ENCODE measurements at regions of chr4 and their contacts with region 1.

Region 1: DNA sequence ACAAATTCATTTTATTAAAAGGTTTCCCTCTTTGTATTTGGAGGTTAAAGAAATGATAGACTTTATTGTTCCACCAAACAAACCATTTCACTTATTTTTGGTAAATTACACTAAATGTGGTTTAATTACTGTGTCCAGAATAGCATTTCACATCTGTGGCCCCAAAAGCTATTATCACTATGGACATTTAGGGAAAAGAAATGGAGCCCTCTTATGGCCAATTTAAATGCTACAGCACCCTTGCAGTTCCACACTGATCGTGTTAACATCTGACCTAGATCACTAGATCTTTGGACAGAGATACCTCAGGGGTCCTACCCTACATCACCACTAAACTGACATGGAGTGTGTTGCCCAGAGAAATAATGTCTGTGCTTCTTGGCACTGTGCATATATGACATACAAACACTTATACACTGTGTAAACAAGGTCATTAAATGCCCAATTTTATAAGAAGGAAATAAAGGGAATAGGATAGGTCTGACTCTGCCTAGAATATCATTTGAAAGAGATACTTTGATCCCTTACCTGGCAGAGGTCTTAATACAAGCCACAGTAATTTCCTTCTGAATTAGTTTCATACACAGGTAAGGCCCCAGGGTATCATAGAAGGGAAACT is 163.9 kb downstream of the KDR start:
- DNase-seq: no peak
- ATAC-seq: peak; percentile 49
- H3K4me3 ChIP-seq: no peak overlapping the region
- H3K27ac ChIP-seq: no peak overlapping the region
- H3K4me1 ChIP-seq: no peaks in the 10 kb centered on the region
- H3K27me3 ChIP-seq: no peaks in the 10 kb centered on the region
- CTCF ChIP-seq: peak in 2 of 3 experiments; percentile 46; a peak in 4 of 6 replicates
- EP300 ChIP-seq: no peak
- POLR2A ChIP-seq: no peak
- RAD21 ChIP-seq: peak; percentile 53

Region 2: DNA sequence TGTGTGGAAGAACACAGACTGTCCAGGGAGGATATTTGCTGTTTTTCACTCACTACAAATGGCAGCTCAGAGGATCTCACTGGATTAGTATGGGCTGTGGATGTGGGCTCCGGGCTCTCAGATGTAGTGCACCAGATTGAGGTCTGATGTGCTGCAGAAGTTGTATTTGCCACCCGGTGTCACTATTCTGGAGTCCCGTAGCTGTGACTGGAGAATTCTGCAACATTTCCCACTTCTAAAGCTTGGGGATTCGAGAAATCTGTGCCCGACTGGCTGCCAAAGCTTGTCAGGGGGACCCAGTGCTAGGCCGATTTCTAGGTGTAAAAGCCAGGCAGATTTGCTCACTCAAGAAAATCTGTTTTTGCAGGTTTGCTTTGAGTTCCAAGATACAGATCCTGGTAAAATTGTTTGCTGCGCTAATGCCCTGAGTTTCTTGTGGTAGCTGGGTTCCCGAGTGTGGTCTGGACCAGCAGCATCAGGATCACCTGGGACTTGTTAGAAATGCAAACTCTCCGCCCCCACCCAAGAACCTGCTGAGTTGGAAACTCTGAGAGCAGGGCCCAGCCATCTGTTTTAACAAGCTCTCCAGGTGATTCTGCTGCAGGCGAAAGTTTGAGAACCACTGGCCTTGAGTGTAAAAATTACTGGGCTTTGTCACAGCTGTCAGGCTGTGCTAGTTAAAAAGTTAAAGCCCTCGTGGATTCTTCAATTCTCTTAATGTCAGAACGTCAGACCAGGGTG is 285.6 kb before region 1 on chr4:
- CTCF ChIA-PET with region 1: no interaction called
- POLR2A ChIA-PET with region 1: no interaction called
- RAD21 ChIA-PET with region 1: no interaction called
- SMC1A ChIA-PET with region 1: no interaction called
- in situ Hi-C with region 1: loop called (anchors 10 kb)
- intact Hi-C with region 1: loop called (anchors 5 kb)
- DNase-seq: no peak
- ATAC-seq: no peak
- H3K4me3 ChIP-seq: no peak overlapping the region
- H3K27ac ChIP-seq: no peak overlapping the region
- H3K4me1 ChIP-seq: no peaks in the 10 kb centered on the region
- H3K27me3 ChIP-seq: no peaks in the 10 kb centered on the region
- CTCF ChIP-seq: no peak
- EP300 ChIP-seq: no peak
- POLR2A ChIP-seq: no peak
- RAD21 ChIP-seq: no peak

Region 3: DNA sequence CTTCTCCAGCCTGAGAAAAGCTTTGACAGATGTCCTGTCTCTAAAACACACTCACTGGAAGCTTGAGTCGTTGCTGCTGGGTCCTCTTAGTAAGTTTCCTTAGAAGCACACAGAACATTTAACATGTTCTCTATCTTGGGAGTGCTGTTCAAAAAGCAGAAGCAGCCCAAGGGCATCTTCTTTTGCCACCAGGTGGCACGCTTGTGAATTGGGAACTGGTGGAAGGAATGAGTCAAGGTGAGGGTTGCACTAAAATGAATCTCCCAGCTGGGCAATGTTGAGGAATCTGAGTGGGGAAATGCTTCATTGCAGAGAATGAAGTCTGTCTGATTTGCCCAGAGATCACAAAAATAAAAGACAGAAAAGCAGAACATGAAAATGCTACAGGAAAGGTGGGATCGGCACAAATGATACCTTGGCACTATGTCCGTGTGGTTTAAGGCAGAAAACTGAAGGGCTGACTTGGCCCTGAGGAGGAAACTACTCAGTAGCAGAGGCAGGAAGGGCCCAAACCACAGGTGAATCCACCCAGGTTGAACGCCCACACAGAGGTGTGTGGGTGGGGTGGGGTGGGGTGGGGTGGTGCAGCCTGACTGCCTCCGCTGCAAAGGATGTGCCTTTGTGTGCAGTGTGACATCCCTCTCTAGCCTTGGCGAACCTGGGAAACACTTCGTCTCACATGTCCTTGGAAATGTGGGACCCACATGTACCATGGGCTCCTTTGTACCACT is 277.7 kb before region 1 on chr4:
- CTCF ChIA-PET with region 1: no interaction called
- POLR2A ChIA-PET with region 1: no interaction called
- RAD21 ChIA-PET with region 1: no interaction called
- SMC1A ChIA-PET with region 1: no interaction called
- in situ Hi-C with region 1: loop called (anchors 10 kb)
- intact Hi-C with region 1: loop called (anchors 5 kb)
- DNase-seq: no peak
- ATAC-seq: peak; percentile 76
- H3K4me3 ChIP-seq: no peak overlapping the region
- H3K27ac ChIP-seq: no peak overlapping the region
- H3K4me1 ChIP-seq: peaks cover 2% of the 10 kb centered on the region; the same call in 1 of the 2 replicates
- H3K27me3 ChIP-seq: no peaks in the 10 kb centered on the region
- CTCF ChIP-seq: peak; percentile 52 to 61 (median 60); a peak in 5 of 6 replicates
- EP300 ChIP-seq: no peak
- POLR2A ChIP-seq: no peak
- RAD21 ChIP-seq: peak; percentile 64

Measured in GM12878 (cell line).